Activated CD4-positive, alpha-beta T cell treated with anti-CD3 and anti-CD28 coated beads, Interleukin-2, amount 10 ng/mL, durations not matched to agents 24 days and 14 days (primary cell): ENCODE measurements at regions of chr1 and their contacts with region 1.

Region 1: GRCh38 chr1:223811634-223812415 is 33.9 kb downstream of the TP53BP2 start:
- DNase-seq: peak; percentile 69
- H3K4me3 Mint-ChIP-seq: no peak overlapping the region
- H3K27ac Mint-ChIP-seq: no peak overlapping the region
- H3K4me1 Mint-ChIP-seq: peaks cover 22% of the 10 kb centered on the region
- H3K27me3 Mint-ChIP-seq: no peaks in the 10 kb centered on the region

Region 2: GRCh38 chr1:223832637-223832943 is 20.8 kb after region 1 on chr1:
- intact Hi-C with region 1: no loop called
- DNase-seq: peak; percentile 65
- H3K4me3 Mint-ChIP-seq: peak overlapping the region; percentile 51
- H3K27ac Mint-ChIP-seq: peak overlapping the region; percentile 85
- H3K4me1 Mint-ChIP-seq: peaks cover 24% of the 10 kb centered on the region
- H3K27me3 Mint-ChIP-seq: no peaks in the 10 kb centered on the region

Region 3: GRCh38 chr1:224051086-224051406 is 239.2 kb after region 1 on chr1:
- intact Hi-C with region 1: loop called (anchors 1 kb)
- DNase-seq: no peak
- H3K4me3 Mint-ChIP-seq: no peak overlapping the region
- H3K27ac Mint-ChIP-seq: no peak overlapping the region
- H3K4me1 Mint-ChIP-seq: peaks cover 2% of the 10 kb centered on the region
- H3K27me3 Mint-ChIP-seq: peaks cover 18% of the 10 kb centered on the region